Caco-2 (cell line): ENCODE measurements at regions of chr7 and their contacts with region 1.

Region 1: GRCh38 chr7:152463709-152464311 is 28.0 kb upstream of the KMT2C start:
- DNase-seq: peak; percentile 100
- H3K4me3 ChIP-seq: peak overlapping the region; percentile 98
- H3K4me3 Mint-ChIP-seq: peak overlapping the region; percentile 89
- H3K27ac Mint-ChIP-seq: peak overlapping the region; percentile 86
- H3K4me1 ChIP-seq: 0 out of 2 replicates have a peak, but pooled peaks cover 5% of the 10 kb centered on the region
- H3K4me1 Mint-ChIP-seq: peaks cover 10% of the 10 kb centered on the region
- H3K27me3 ChIP-seq: no peaks in the 10 kb centered on the region
- H3K27me3 Mint-ChIP-seq: no peaks in the 10 kb centered on the region
- CTCF ChIP-seq: no peak

Region 2: DNA sequence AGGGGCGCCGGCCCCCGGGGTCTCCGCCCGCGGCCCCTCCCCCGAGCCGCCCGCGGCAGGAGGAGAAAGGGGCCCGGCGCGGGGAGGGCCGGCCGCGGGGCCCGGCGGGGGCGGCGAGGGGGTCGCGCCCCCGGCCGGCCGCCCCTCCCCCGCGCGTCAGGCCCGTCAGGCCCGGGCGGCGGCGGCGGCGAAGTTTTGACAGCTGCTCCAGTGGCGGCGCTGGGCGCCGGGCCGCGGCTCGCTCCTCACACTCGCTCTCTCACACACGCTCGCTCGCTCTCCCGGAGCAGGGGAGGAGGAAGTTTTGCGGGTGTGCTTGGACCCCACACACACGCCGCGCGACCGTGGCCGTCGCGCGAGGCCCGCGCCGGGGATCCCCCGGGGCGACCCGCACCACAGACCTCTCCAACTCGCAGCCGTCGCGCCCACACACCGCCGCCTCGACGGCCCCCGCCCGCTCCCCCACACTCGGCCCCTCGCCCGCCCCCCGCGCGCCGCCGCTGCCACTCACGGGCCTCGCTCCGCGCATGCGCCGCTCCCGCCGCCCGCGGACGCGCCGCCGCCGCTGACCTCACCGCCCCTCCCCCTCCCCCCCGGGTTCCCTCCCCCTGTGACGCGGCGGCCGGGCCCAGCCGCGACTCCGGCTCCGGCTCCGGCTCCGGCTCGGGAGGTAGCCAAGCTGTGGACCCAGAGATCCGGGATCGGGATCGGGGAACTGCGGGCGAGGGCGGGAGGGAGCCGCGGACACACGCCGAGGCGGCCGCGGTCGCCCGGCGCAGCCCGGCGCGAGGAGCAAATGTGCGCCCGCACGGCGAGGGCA is 27.5 kb before region 1 on chr7:
- CTCF ChIA-PET with region 1: interaction called, 3 read pairs
- POLR2A ChIA-PET with region 1: interaction called, 4 read pairs
- intact Hi-C with region 1: loop called (anchors 1 kb)
- DNase-seq: peak; percentile 94 to 98
- H3K4me3 ChIP-seq: peak overlapping the region; percentile 80
- H3K4me3 Mint-ChIP-seq: peak overlapping the region; percentile 98
- H3K27ac Mint-ChIP-seq: peak overlapping the region; percentile 82
- H3K4me1 ChIP-seq: no peaks in the 10 kb centered on the region
- H3K4me1 Mint-ChIP-seq: no peaks in the 10 kb centered on the region
- H3K27me3 ChIP-seq: no peaks in the 10 kb centered on the region
- H3K27me3 Mint-ChIP-seq: no peaks in the 10 kb centered on the region
- CTCF ChIP-seq: no peak

Region 3: DNA sequence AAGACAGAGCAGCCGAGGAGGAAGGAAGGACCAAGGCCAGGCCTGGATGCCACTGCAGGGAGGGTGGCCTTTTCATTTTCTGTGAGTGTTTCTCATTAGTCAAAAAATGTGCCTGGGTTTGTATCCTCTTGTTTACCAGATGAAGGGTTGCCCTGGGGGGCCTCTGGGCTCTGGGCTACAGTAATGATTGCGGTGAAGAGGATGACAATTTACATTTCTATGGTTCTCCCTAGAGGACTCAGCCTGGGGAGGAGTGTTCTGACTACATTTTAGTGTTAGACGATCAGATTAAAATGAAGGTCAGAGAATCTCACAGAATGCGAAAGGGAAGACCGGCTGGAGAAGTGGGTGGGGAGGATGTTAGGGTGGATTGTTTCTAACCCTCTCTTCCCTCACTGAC is 80.0 kb after region 1 on chr7:
- CTCF ChIA-PET with region 1: no interaction called
- POLR2A ChIA-PET with region 1: no interaction called
- intact Hi-C with region 1: loop called (anchors 5 kb)
- DNase-seq: peak in 1 of 2 experiments; percentile 35
- H3K4me3 ChIP-seq: no peak overlapping the region
- H3K4me3 Mint-ChIP-seq: no peak overlapping the region
- H3K27ac Mint-ChIP-seq: peak overlapping the region; percentile 76
- H3K4me1 ChIP-seq: peaks cover 5% of the 10 kb centered on the region; the same call in 1 of the 2 replicates
- H3K4me1 Mint-ChIP-seq: peaks cover 13% of the 10 kb centered on the region
- H3K27me3 ChIP-seq: no peaks in the 10 kb centered on the region
- H3K27me3 Mint-ChIP-seq: no peaks in the 10 kb centered on the region
- CTCF ChIP-seq: no peak

Region 4: GRCh38 chr7:152574892-152575640 is 111.3 kb after region 1 on chr7:
- CTCF ChIA-PET with region 1: no interaction called
- POLR2A ChIA-PET with region 1: no interaction called
- intact Hi-C with region 1: loop called (anchors 5 kb)
- DNase-seq: peak in 1 of 2 experiments; percentile 47
- H3K4me3 ChIP-seq: no peak overlapping the region
- H3K4me3 Mint-ChIP-seq: no peak overlapping the region
- H3K27ac Mint-ChIP-seq: no peak overlapping the region
- H3K4me1 ChIP-seq: 0 out of 2 replicates have a peak, but pooled peaks cover 6% of the 10 kb centered on the region
- H3K4me1 Mint-ChIP-seq: peaks cover 16% of the 10 kb centered on the region
- H3K27me3 ChIP-seq: no peaks in the 10 kb centered on the region
- H3K27me3 Mint-ChIP-seq: no peaks in the 10 kb centered on the region
- CTCF ChIP-seq: no peak

Region 5: GRCh38 chr7:152759949-152760853 is 296.4 kb after region 1 on chr7:
- CTCF ChIA-PET with region 1: interaction called, 3 read pairs
- POLR2A ChIA-PET with region 1: no interaction called
- intact Hi-C with region 1: loop called (anchors 5 kb)
- DNase-seq: peak; percentile 41 to 44
- H3K4me3 ChIP-seq: peak overlapping the region; percentile 98
- H3K4me3 Mint-ChIP-seq: peak overlapping the region; percentile 76
- H3K27ac Mint-ChIP-seq: peak overlapping the region; percentile 61
- H3K4me1 ChIP-seq: peaks cover 12% of the 10 kb centered on the region; the same call in 1 of the 2 replicates
- H3K4me1 Mint-ChIP-seq: no peaks in the 10 kb centered on the region
- H3K27me3 ChIP-seq: no peaks in the 10 kb centered on the region
- H3K27me3 Mint-ChIP-seq: peaks cover 2% of the 10 kb centered on the region
- CTCF ChIP-seq: no peak